Ascending aorta (tissue), 2 donors: ENCODE measurements at regions of chr6 and their contacts with region 1.

Region 1: DNA sequence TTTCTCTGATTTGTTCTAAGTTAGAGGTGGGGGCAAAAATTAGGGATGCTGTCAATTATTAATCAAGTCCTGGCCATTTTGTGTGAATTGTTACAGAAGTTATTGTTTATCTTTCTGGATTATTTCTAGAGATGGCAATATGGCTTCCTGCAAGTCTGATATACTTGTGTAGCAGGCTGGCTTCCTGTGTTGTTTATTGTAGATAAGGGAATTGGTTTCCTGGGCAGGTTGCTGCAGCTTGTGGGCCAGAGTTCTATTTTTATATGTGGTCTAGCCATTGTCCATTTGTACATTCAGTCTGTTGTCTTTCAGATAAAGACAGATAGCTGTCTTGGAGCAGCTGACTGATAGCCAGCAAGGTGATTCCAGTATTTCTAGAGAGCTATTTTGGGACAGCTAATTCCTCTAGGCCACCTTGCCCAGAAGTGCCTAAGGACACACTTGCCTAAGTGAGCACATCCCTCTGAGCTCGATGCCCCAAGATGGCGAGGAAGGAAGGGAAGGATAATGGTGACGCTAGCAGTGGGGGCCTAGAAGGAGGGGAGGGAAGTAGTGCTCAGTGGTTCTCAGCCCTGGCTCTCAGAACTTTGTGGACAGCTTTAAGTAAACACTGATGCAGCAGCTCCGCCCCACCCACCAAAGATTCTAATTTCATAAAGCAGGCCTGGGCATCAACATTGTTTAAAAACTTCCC is 25.5 kb downstream of the DDO start:
- DNase-seq: no peak
- H3K4me3 ChIP-seq: no peak overlapping the region
- H3K27ac ChIP-seq: no peak overlapping the region
- H3K4me1 ChIP-seq: no peaks in the 10 kb centered on the region
- H3K27me3 ChIP-seq: no peaks in the 10 kb centered on the region
- CTCF ChIP-seq: no peak

Region 2: DNA sequence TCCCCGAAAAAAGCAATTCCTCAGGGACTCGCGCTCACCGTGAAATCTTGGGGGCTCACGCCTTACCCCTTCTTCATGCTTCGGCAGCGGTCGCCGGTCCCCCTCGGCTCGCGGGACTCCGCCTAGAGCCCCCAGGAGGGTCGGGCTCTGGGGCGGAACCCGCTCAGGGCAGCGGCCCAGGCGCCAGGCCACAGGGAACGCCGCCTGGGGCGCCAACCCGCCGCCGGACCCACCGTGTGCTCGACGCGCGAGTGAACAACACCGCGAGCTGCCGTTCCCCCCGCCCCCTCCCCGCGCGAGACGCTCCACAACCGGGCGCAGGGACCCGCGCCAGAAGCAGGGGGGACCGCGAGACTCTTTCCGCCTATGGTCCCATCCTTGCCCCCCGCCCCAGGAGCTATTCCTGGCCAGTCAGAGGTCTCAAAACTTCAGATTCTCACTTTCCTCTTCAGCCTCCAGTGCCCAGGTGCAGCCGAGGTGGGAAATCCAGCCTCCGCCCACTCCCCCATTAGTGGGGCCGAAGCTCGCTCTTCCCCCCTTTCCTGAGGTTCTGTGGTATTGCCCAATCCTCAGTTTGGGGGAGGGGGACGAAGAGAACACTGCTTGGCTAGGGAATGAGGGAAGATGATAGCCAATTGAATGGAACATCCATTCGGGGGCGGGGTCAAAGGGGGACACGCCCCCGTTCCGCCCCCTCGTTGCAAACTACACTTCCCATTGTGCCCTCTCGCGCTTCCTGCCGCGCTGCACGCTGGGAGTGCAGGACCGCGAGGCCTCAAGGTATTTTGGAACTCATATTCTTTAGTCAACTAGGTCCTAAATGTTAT is 210.2 kb before region 1 on chr6 and contains the start of gene WASF1:
- intact Hi-C with region 1: loop called (anchors 1 kb)
- DNase-seq: peak; percentile 84 to 98
- H3K4me3 ChIP-seq: peak within 1 kb of the TSS; percentile 85 to 86
- H3K27ac ChIP-seq: peak within 1 kb of the TSS; percentile 81 to 83
- H3K4me1 ChIP-seq: peaks cover 3 to 22% of the 10 kb centered on the region in 2 donors
- H3K27me3 ChIP-seq: no peaks in the 10 kb centered on the region
- CTCF ChIP-seq: peak in 1 of 3 experiments; percentile 13
- total RNA-seq, gene WASF1: 0.53 TPM

Region 3: GRCh38 chr6:110325197-110325596 is 64.6 kb before region 1 on chr6:
- intact Hi-C with region 1: loop called (anchors 5 kb)
- DNase-seq: no peak
- H3K4me3 ChIP-seq: no peak overlapping the region
- H3K27ac ChIP-seq: peak overlapping the region; percentile 21 to 30
- H3K4me1 ChIP-seq: peaks cover 4 to 17% of the 10 kb centered on the region in 2 donors
- H3K27me3 ChIP-seq: no peaks in the 10 kb centered on the region
- CTCF ChIP-seq: no peak